Gastrocnemius medialis (tissue), 4 donors: ENCODE measurements at regions of chr10 and their contacts with region 1.

Region 1: GRCh38 chr10:114470956-114471905 is 66.9 kb upstream of the AFAP1L2 start:
- DNase-seq: peak; percentile 31 to 55
- ATAC-seq: peak; percentile 85 to 86
- H3K4me3 ChIP-seq: no peak overlapping the region
- H3K27ac ChIP-seq: peak overlapping the region; percentile 68 to 80 (median 76)
- H3K4me1 ChIP-seq: peaks cover 13 to 34% of the 10 kb centered on the region in 2 donors
- H3K27me3 ChIP-seq: no peaks in the 10 kb centered on the region
- CTCF ChIP-seq: peak; percentile 66 to 93 (median 77)
- POLR2A ChIP-seq: no peak

Region 2: DNA sequence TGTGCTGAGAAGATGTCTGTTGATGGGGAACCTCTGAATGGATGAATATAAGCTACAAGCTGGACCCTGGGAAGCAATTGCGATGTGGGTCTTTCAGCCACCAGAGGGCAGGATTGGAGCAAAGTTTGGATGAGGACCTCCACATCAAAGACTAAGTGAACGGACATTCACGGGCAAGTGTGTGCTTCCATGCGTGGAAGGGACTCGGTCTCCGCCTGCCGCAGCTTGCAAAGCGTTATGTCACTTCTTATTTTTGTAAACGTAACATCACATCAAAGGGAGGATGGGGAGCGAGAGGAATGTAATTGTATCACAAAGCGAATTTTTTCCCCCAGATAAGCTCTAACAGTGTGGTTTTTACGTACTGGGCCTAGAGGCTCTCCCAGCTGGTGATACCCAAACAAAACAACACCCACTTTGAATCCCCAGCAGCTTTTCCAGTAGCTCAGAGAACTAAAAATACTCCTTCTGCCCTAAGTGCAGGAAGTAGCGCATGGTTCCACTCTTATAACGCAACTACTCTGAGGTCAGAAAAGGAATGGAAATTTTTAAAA is 167.1 kb before region 1 on chr10:
- in situ Hi-C with region 1: loop called in 1 of 4 experiments (anchors 10 kb)
- intact Hi-C with region 1: no loop called
- DNase-seq: peak; percentile 41 to 68
- ATAC-seq: peak; percentile 87 to 94
- H3K4me3 ChIP-seq: peak overlapping the region; percentile 14 to 47 (median 40)
- H3K27ac ChIP-seq: peak overlapping the region in 2 of 4 donors; percentile 2 to 40
- H3K4me1 ChIP-seq: peaks cover 8 to 13% of the 10 kb centered on the region in 2 donors
- H3K27me3 ChIP-seq: no peaks in the 10 kb centered on the region
- CTCF ChIP-seq: peak; percentile 59 to 77 (median 72)
- POLR2A ChIP-seq: no peak

Region 3: DNA sequence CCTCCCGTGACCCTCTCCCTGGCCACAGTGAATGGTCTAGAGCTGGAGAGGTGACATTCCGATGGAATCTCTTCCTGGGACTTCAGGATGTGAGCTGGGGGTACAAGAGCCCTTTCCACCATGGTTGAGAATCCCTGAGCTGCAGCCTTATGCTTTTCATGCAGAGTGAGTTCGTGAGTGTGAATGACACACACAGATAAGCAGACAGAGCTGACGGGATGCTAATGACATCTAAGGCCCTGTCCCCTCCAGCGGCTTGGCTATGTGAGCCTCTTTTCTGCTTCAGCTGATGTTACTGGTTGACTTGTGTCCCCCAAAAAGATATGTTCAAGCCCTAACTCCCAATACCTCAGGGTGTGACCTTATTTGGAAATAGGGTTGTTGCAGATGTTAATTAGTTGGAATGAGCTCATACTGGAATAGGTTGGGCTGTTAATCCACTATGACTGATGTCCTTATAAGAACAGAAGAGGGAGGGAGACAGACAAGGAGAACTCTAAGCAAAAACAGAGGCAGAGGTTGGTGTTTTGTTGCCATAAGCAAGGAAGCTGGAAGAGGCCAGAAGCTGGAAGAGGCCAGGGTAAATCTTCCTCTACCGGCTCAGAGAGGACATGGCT is 44.2 kb after region 1 on chr10:
- in situ Hi-C with region 1: no loop called
- intact Hi-C with region 1: no loop called
- DNase-seq: no peak
- ATAC-seq: no peak
- H3K4me3 ChIP-seq: no peak overlapping the region
- H3K27ac ChIP-seq: peak overlapping the region in 2 of 4 donors; percentile 33 to 35
- H3K4me1 ChIP-seq: peaks cover 5 to 8% of the 10 kb centered on the region in 2 donors
- H3K27me3 ChIP-seq: no peaks in the 10 kb centered on the region
- CTCF ChIP-seq: no peak
- POLR2A ChIP-seq: no peak

Region 4: GRCh38 chr10:114631666-114632417 is 160.6 kb after region 1 on chr10:
- in situ Hi-C with region 1: no loop called
- intact Hi-C with region 1: loop called (anchors 5 kb)
- DNase-seq: peak in 1 of 2 donors; percentile 44
- ATAC-seq: peak; percentile 18 to 48
- H3K4me3 ChIP-seq: peak overlapping the region; percentile 56 to 60 (median 58)
- H3K27ac ChIP-seq: peak overlapping the region; percentile 67 to 81 (median 79)
- H3K4me1 ChIP-seq: peaks cover 37 to 48% of the 10 kb centered on the region in 2 donors
- H3K27me3 ChIP-seq: peaks cover 13 to 33% (median 32%) of the 10 kb centered on the region in 3 donors
- CTCF ChIP-seq: no peak
- POLR2A ChIP-seq: peak; percentile 35 to 41

Region 5: DNA sequence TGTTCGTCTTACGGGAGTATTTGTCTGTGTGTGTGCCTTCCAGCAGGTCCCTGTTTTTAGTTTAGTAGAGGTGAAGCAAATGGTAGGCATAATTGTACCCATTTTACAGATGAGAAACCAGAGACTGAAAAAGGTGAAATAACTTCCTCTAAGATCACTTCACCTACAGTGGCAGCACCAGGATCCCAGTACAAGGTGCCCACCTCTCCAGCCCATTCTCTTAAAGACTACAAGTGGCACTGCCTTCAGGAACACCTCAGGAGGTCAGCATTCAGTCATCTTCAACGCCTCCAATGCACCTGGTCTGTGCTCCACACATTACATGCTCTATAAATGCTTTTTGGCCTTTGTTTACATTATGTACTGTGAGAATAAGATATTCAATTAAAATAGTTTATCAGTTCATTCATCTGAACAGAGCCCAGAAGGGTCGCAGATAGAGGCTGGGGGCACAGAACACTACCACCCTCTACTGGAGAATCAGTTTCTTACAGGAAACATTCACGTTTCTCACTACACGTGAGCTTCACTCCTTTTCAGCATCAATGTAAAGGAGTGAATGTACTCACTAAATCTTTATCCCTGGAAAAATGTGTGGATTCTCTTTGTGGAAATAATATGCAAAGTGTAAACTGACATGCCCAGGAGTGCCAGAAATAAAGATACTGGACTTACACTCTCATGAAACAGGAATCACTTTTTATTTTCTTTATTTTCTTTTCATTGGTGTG is 232.3 kb after region 1 on chr10:
- in situ Hi-C with region 1: loop called in 3 of 4 experiments (anchors 10 kb)
- intact Hi-C with region 1: loop called (anchors 5 kb)
- DNase-seq: no peak
- ATAC-seq: peak; percentile 28 to 68
- H3K4me3 ChIP-seq: no peak overlapping the region
- H3K27ac ChIP-seq: peak overlapping the region in 2 of 4 donors; percentile 18 to 35
- H3K4me1 ChIP-seq: peaks cover 0 to 7% of the 10 kb centered on the region in 2 donors
- H3K27me3 ChIP-seq: no peaks in the 10 kb centered on the region
- CTCF ChIP-seq: peak; percentile 41 to 71 (median 62)
- POLR2A ChIP-seq: no peak

Region 6: GRCh38 chr10:114779803-114780609 is 308.8 kb after region 1 on chr10:
- in situ Hi-C with region 1: loop called (anchors 5 to 10 kb)
- intact Hi-C with region 1: no loop called
- DNase-seq: no peak
- ATAC-seq: peak in 1 of 2 donors; percentile 33
- H3K4me3 ChIP-seq: no peak overlapping the region
- H3K27ac ChIP-seq: peak overlapping the region in 3 of 4 donors; percentile 24 to 46 (median 39)
- H3K4me1 ChIP-seq: no peaks in the 10 kb centered on the region
- H3K27me3 ChIP-seq: no peaks in the 10 kb centered on the region
- CTCF ChIP-seq: no peak
- POLR2A ChIP-seq: peak in 1 of 2 donors; percentile 19

Region 7: GRCh38 chr10:114821293-114821914 is 350.2 kb after region 1 on chr10 and contains the start of gene FHIP2A:
- in situ Hi-C with region 1: no loop called
- intact Hi-C with region 1: loop called (anchors 2 kb)
- DNase-seq: peak; percentile 40 to 76
- ATAC-seq: peak; percentile 65 to 73
- H3K4me3 ChIP-seq: peak within 1 kb of the TSS; percentile 77 to 89 (median 86)
- H3K27ac ChIP-seq: peak within 1 kb of the TSS; percentile 96 to 98 (median 96)
- H3K4me1 ChIP-seq: peaks cover 23 to 27% of the 10 kb centered on the region in 2 donors
- H3K27me3 ChIP-seq: no peaks in the 10 kb centered on the region
- CTCF ChIP-seq: peak in 4 of 5 experiments; percentile 82 to 91 (median 90)
- POLR2A ChIP-seq: peak; percentile 80 to 82
- total RNA-seq, gene FHIP2A: 22.2 to 35.7 (median 30.1) TPM

Region 8: DNA sequence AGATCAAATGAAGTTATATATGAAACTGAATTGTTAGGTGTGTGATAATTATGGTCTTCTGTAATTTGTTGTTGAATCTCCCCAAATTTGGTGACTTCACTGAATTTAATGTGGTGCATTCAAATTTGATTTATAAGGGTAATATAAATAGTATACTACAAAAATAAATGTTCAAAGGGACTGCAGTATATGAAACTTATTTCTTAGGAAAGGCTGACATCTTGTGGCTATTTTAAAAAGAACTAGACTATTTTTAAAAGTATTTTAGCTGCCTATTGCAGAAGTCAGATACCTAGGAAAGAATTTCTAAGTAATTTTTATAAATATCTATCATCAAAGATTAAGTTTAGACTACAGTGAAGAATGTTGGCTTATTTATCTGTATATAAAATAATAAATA is 658.5 kb after region 1 on chr10:
- in situ Hi-C with region 1: loop called in 1 of 4 experiments (anchors 25 kb)
- intact Hi-C with region 1: loop called (anchors 10 kb)
- DNase-seq: no peak
- ATAC-seq: peak in 1 of 2 donors; percentile 44
- H3K4me3 ChIP-seq: no peak overlapping the region
- H3K27ac ChIP-seq: no peak overlapping the region
- H3K4me1 ChIP-seq: no peaks in the 10 kb centered on the region
- H3K27me3 ChIP-seq: no peaks in the 10 kb centered on the region
- CTCF ChIP-seq: peak; percentile 19 to 42 (median 40)
- POLR2A ChIP-seq: no peak